Dendritic cell treated with granulocyte-macrophage colony-stimulating factor and Interleukin-4, amounts not matched to agents 40 ng/mL and 50 ng/mL, for 4 days (primary cell): ENCODE measurements at regions of chr2 and their contacts with region 1.

Region 1: GRCh38 chr2:55133467-55134315 is 83.4 kb upstream of the RTN4 start:
- H3K4me3 Mint-ChIP-seq: peak overlapping the region; percentile 76
- H3K27ac Mint-ChIP-seq: peak overlapping the region; percentile 85
- H3K4me1 Mint-ChIP-seq: peaks cover 54% of the 10 kb centered on the region
- H3K27me3 Mint-ChIP-seq: no peaks in the 10 kb centered on the region

Region 2: GRCh38 chr2:54722641-54723040 is 411.1 kb before region 1 on chr2:
- intact Hi-C with region 1: no loop called
- H3K4me3 Mint-ChIP-seq: peak overlapping the region; percentile 95
- H3K27ac Mint-ChIP-seq: peak overlapping the region; percentile 68
- H3K4me1 Mint-ChIP-seq: peaks cover 14% of the 10 kb centered on the region
- H3K27me3 Mint-ChIP-seq: peaks cover 69% of the 10 kb centered on the region

Region 3: DNA sequence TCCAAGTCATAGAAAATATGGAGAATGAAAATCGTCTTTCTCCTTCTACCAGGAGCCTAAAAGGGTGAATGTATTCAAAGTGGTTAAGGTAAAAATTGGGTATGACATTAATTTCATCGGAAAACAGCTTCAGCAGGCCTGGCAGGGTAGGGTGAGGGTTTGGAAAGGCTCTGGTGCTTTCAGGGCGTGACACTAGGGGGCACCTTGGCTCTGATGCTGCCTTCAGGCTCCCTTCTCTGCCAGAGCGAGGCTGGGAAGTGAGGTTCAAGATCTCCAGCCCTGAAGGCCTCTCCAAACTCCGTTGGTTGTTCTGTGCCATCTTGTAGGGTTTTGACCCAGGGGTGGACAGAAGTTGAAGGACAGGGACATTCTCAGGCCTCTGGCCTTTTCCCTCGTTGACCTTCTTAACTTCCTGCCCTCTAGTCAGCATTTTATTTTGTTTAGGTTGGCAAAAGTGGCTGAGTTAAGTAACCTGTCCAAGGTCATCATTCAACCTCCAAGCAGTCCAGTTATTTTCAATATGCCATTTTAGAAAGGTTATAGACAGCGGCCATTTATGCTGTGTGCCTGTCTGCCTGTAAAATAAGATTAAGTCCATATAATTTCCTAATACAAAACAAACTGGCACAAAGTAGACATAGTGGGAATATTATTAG is 369.9 kb before region 1 on chr2:
- intact Hi-C with region 1: no loop called
- H3K4me3 Mint-ChIP-seq: no peak overlapping the region
- H3K27ac Mint-ChIP-seq: no peak overlapping the region
- H3K4me1 Mint-ChIP-seq: no peaks in the 10 kb centered on the region
- H3K27me3 Mint-ChIP-seq: no peaks in the 10 kb centered on the region

Region 4: DNA sequence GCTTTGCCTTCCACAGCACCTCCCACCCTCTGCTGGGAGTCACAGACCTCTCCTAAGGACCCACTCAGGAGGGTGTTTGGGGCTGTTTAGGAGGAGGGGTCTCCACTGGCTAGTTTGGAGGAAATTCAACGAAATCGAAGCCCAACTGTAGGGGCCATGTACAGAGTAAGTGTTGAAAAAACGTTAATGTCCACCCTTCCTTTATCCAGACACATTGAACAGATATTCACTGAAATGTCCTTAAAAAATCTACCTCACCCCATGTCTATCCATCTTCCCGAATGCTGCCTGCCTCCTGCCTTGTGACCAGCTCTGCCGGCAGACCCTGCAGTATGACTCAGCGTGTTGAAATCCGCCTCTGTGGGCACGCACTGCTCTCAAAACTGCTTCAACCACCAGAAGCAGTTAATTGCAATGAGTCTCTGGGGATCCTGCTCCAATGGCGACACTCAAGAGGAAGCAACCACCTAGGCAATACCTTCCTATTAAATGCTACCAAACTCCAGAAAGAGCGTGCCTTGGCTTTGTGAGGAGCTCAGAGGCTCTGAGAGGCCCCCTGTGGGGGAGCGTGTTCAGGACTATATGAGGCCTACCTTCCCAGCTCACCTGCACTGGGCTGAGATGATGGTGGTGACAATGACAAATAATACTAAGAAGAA is 22.0 kb before region 1 on chr2:
- intact Hi-C with region 1: loop called (anchors 2 kb)
- H3K4me3 Mint-ChIP-seq: peak overlapping the region; percentile 36
- H3K27ac Mint-ChIP-seq: peak overlapping the region; percentile 92
- H3K4me1 Mint-ChIP-seq: peaks cover 48% of the 10 kb centered on the region
- H3K27me3 Mint-ChIP-seq: no peaks in the 10 kb centered on the region

Region 5: GRCh38 chr2:55150834-55151233 is 17.1 kb after region 1 on chr2:
- intact Hi-C with region 1: loop called (anchors 1 kb)
- H3K4me3 Mint-ChIP-seq: no peak overlapping the region
- H3K27ac Mint-ChIP-seq: peak overlapping the region; percentile 41
- H3K4me1 Mint-ChIP-seq: peaks cover 63% of the 10 kb centered on the region
- H3K27me3 Mint-ChIP-seq: no peaks in the 10 kb centered on the region

Region 6: DNA sequence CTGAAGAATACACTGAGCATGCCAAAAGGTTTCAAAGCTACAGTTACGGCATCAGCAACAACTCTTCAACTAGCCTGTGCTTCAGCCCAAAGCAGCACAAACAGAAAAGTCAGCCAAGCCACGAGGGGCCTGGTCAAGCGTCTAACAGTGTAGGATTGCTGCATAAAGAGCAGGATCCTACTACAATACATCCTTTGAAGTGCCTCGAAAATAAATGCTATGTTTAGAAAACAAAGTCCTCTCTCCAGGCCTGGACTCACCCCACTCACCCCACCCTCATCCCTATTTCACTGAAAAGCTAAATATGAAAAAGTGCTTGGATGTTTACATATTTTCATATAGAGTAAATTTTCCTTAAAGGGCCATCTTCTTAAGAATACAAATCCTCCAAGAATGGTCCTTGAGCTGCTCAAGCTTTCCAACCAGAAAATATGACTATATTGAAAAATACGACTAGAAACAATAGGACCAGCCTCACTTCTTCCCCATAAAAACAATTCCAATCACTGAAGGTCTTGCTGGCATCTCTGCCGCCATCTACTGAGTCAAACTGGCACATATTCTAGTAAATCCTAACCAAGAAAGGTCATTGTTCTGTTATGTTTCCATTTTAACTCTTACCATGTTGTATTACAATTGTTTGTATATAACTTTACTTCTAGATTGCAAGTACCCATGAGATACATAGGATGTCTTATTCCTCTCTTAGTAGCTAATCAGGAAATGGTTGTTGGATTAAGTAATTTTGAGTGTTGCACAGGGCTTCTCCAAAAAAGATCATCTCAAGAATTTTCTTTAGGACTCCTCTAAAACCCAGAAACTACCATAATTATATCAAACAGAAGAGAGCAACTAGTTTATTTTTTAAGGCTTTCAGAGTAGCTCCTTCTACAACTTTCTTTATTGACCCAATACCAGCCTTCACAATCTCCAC is 34.8 kb after region 1 on chr2:
- intact Hi-C with region 1: loop called (anchors 5 kb)
- H3K4me3 Mint-ChIP-seq: no peak overlapping the region
- H3K27ac Mint-ChIP-seq: no peak overlapping the region
- H3K4me1 Mint-ChIP-seq: peaks cover 21% of the 10 kb centered on the region
- H3K27me3 Mint-ChIP-seq: no peaks in the 10 kb centered on the region

Region 7: DNA sequence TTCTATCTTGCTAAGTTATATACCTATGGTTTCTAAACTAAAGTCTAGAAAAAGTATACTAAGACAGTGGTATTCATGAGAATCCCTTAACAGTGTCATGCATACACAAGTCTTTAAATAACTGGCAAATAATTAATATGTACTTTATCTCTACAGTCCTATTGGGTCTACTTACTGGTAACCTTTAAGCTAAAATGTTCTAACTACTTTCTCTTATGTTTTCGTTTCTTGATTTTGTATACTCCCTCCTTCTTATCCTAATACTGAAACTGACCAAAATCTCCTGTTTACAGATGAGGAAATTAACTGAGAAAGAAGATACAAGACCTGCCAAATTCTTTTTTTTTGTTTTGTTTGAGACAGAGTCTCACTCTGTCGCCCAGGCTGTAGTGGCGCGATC is 211.4 kb after region 1 on chr2:
- intact Hi-C with region 1: no loop called
- H3K4me3 Mint-ChIP-seq: no peak overlapping the region
- H3K27ac Mint-ChIP-seq: no peak overlapping the region
- H3K4me1 Mint-ChIP-seq: no peaks in the 10 kb centered on the region
- H3K27me3 Mint-ChIP-seq: no peaks in the 10 kb centered on the region